ENCODE measurements at regions of chrX and their contacts with region 1.

Region 1: DNA sequence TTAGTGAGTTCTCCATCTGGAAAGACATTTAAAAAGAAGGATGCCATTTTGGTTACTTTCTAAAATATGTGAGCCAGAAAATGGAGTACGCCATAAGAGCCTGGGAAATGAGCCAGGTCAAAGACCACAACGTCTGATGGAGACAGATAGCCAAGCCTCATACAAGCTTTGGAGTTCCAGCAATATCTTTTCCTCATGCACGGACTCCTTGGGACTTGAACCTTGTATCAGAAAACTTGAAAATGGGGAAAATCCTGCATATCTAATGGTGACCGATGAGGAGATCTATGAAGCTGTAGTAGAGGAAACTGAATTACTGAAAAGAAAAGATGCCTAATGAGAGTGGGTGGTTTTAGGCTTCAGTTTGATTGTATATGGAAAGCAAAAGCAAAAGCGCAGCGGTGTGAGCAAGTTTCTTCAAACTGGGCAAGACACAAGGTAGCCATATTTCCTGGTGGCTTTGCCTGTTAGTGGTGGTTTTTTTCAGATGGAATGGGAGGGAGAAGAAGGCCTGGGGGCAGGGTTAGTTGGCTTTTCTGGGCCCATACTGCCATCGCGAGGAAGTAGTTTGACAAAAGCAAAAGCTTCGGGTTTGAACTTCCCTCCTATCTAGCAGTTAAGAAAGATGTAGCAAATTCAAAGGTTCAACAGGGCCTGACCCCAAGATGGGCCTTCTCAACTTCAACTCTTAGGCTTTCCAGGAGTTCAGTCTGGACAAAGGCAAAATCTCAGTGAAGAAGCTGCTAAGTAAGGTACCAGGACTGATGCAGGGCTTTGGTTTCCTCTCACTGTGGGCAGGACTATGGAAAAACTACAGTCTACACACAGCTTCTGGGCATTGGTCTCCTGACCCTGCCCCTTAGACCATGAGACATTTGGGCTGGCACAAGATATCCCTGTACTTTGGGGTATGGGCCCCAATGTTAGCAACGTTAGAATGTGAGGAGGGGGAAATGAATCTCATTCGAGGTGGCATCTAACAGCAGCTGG is 210.0 kb upstream of the STK26 start:
- DNase-seq: peak; percentile 79
- ATAC-seq: peak; percentile 75
- H3K4me3 ChIP-seq: peak overlapping the region; percentile 73
- H3K27ac ChIP-seq: peak overlapping the region; percentile 50; the same call in 1 of the 2 replicates
- H3K4me1 ChIP-seq: no peaks in the 10 kb centered on the region
- H3K27me3 ChIP-seq: no peaks in the 10 kb centered on the region
- CTCF ChIP-seq: peak; percentile 64
- POLR2A ChIP-seq: no peak
- RAD21 ChIP-seq: peak; percentile 78

Region 2: DNA sequence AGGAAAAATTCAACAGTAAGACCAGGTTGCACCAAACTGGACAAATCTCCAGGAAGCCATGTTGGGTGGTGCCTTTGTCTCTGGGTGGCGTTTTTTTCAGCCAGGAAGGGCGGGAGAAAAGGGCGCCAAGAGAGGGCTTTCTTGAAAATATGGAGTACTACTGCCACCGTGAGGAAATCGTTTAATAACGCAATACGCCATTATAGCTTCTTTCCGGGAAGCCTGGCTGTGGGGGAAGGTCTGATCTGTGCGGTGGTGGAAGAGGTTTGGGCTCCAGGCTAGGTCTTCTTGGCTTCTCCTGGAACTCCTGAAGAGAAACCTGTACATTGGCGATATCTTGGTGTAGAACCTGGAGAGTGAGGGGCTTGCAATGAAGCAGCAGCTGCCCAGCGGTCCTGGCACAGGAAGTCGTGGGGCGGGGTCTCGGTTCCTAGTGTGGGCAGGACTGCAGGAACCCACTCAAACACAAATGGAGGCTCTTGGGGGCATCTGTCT is 66.6 kb before region 1 on chrX:
- CTCF ChIA-PET with region 1: no interaction called
- POLR2A ChIA-PET with region 1: no interaction called
- dilution Hi-C with region 1: no loop called
- in situ Hi-C with region 1: no loop called
- intact Hi-C with region 1: loop called (anchors 2 kb)
- DNase-seq: peak; percentile 86
- ATAC-seq: peak; percentile 73
- H3K4me3 ChIP-seq: peak overlapping the region; percentile 60
- H3K27ac ChIP-seq: peak overlapping the region; percentile 95
- H3K4me1 ChIP-seq: no peaks in the 10 kb centered on the region
- H3K27me3 ChIP-seq: no peaks in the 10 kb centered on the region
- CTCF ChIP-seq: peak; percentile 64
- POLR2A ChIP-seq: no peak
- RAD21 ChIP-seq: peak; percentile 69

Region 3: DNA sequence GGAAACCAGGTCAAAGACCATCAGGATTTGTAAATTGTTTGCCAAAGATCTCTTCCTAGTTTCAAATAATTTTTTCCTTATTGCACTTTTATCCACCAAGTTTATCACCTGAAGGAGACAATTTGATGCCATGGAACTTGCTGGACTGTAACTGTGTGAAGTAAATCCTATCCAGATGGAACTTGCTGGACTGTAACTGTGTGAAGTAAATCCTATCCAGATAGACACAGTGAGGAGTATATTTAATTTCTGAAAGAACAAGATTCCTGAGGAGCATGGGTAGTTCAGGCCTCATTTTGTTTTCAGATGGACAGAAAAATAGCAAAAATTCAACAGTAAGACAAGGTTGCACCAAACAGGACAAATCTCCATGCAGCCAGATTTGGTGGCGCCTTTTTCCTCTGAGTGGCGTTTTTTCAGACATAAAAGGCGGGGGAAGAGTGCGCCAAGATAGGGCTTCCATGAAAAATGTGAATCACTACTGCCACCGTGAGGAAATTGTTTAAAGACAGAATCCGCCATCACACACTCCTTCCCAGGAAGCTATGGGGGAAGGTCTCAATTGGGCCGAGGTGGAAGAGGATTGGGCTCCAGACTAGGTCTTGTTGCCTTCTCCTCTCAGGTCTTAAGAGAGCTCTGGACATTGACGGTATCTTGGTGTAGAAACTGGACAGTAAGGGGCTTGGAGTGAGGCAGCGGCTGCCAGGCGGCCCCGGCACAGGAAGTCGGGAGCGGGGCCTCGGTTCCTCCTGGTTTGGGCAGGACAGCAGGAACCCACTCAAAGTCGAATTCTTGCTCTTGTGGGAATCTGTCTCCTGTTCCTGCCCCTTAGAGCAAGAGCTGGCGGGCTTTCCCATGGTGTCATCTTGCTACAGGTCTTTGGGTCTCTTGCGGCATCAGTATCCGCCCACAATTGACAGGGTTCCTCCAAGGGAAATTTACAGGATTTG is 34.6 kb before region 1 on chrX:
- CTCF ChIA-PET with region 1: no interaction called
- POLR2A ChIA-PET with region 1: no interaction called
- dilution Hi-C with region 1: no loop called
- in situ Hi-C with region 1: no loop called
- intact Hi-C with region 1: loop called (anchors 2 kb)
- DNase-seq: peak; percentile 76
- ATAC-seq: peak; percentile 89
- H3K4me3 ChIP-seq: peak overlapping the region; percentile 85
- H3K27ac ChIP-seq: peak overlapping the region; percentile 94; the same call in 1 of the 2 replicates
- H3K4me1 ChIP-seq: 0 out of 2 replicates have a peak, but pooled peaks cover 2% of the 10 kb centered on the region
- H3K27me3 ChIP-seq: peaks cover 2% of the 10 kb centered on the region; the same call in 1 of the 2 replicates
- CTCF ChIP-seq: peak; percentile 62
- POLR2A ChIP-seq: no peak
- RAD21 ChIP-seq: peak; percentile 65

Region 4: DNA sequence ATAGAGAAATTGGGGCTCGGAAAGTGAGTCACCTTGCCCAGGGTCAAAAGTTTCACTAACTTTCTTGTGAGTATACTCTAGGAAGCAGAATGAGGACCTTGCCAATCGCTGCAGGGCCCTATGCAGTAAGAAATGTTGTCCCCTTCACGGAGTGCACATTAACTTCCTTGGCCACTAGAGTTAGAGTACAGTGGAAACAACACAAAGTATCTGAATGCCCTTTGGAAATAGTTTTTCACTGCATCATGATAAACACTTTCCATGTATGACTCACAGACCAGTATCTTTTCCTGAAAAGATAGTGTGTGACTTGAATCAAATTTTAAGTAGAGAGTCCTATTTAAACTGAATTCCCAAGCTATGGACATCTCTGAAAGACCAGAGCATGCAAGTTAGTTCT is 164.5 kb after region 1 on chrX:
- CTCF ChIA-PET with region 1: no interaction called
- POLR2A ChIA-PET with region 1: no interaction called
- dilution Hi-C with region 1: no loop called
- in situ Hi-C with region 1: no loop called
- intact Hi-C with region 1: no loop called
- DNase-seq: no peak
- ATAC-seq: no peak
- H3K4me3 ChIP-seq: no peak overlapping the region
- H3K27ac ChIP-seq: no peak overlapping the region
- H3K4me1 ChIP-seq: no peaks in the 10 kb centered on the region
- H3K27me3 ChIP-seq: peaks cover 4% of the 10 kb centered on the region; the same call in 1 of the 2 replicates
- CTCF ChIP-seq: no peak
- POLR2A ChIP-seq: no peak
- RAD21 ChIP-seq: no peak

Measured in IMR-90 (cell line).